Activated CD4-positive, alpha-beta T cell treated with anti-CD3 and anti-CD28 coated beads for 36 hours (primary cell): ENCODE measurements at regions of chr18 and their contacts with region 1.

Region 1: GRCh38 chr18:69330370-69331005 is 70.2 kb upstream of the DOK6 start:
- DNase-seq: no peak
- ATAC-seq: no peak
- H3K4me3 Mint-ChIP-seq: no peak overlapping the region
- H3K27ac Mint-ChIP-seq: no peak overlapping the region
- H3K4me1 Mint-ChIP-seq: no peaks in the 10 kb centered on the region
- H3K27me3 Mint-ChIP-seq: peaks cover 5% of the 10 kb centered on the region

Region 2: DNA sequence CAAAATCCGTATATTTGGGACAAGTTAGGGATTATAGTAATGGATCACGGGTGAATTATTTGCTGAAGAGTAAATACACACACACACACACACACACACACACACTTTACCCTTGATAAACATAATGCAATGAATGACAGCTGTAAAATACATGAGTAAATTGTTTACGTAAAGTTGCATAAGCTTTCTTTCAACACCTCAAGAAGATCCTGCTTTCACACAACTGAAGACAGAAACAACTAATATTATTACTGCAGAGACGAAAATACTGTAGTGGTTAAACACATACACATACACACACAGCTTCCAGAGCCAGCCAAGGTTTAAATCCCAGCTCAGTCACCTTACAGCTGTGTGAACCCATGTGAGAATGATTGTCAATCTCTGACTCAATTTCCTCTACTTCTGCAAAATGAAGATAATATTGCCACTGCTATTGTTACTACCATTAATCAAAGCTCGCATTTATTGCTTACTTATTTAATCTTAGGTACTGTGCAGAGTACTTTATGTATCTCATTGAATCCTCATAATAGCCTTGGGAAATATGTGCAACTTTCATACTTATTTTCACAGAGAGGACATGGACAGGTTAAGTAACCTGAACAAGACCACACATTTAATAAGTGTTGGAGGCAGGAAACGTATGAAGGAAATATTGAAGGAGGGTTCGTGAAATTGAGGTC is 19.6 kb after region 1 on chr18:
- CTCF ChIA-PET with region 1: no interaction called
- POLR2A ChIA-PET with region 1: no interaction called
- intact Hi-C with region 1: loop called in 1 of 2 experiments (anchors 2 kb)
- DNase-seq: no peak
- ATAC-seq: no peak
- H3K4me3 Mint-ChIP-seq: no peak overlapping the region
- H3K27ac Mint-ChIP-seq: no peak overlapping the region
- H3K4me1 Mint-ChIP-seq: no peaks in the 10 kb centered on the region
- H3K27me3 Mint-ChIP-seq: peaks cover 3% of the 10 kb centered on the region

Region 3: DNA sequence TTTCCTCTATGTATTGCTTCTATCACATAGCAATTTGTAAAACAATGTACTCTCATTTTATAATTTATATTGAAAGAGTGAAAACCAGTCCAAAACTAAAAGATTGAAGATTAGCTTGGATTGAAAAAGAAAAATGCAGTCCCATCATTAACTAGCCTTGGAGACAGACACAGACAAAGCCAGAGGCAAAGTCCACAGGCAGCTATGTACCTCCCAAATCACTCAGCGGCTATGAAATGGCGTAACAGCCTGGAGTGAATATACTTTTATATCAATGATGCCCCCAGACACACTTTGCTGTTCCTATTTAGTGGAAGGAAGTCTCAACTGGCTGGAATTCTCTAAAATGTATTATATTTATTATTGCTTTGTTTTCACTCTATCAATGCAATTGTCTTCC is 36.6 kb after region 1 on chr18:
- CTCF ChIA-PET with region 1: no interaction called
- POLR2A ChIA-PET with region 1: no interaction called
- intact Hi-C with region 1: no loop called
- DNase-seq: no peak
- ATAC-seq: no peak
- H3K4me3 Mint-ChIP-seq: no peak overlapping the region
- H3K27ac Mint-ChIP-seq: no peak overlapping the region
- H3K4me1 Mint-ChIP-seq: no peaks in the 10 kb centered on the region
- H3K27me3 Mint-ChIP-seq: peaks cover 2% of the 10 kb centered on the region